ENCODE measurements at regions of chr7 and their contacts with region 1.

Region 1: DNA sequence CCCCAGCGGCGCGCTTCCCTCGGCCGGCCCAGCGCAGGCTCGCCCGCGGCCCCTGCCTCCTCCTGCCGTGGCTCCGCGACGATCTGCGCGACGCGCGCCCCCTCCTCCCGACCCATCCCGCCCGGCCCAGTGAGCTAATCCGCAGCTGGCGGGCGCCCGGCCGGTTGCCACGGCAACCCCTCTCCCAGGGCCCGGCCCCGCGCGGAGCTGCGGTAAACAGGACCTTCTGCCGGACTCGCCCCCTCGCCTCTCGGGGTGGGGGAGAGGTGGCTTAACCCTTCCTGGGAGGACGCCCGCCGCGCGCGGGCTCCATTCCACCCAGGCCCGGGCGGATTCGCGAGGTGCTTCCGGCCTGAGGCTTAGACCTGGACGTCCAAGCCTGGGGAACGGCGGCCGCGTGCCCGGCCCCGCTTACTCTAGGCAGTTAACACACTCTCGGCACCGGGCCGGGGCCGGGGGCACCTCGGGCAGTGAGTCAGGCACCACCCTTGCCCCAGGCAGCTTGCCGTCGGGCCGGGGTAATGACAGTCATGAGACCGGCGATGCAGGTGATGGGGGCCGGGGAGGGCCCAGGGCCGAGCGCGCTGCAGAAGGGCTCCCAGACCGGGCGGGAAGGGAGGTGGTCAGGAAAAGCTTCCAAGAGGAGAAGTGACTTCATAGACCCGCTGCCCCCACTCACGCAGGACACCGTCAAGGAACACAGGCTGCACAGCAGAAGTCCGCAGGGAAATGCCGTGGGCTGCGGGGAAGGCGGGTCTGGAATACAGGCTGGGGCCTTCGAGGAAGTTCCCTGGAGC is at the start of gene DENND2A:
- DNase-seq: peak; percentile 84
- ATAC-seq: peak; percentile 69
- total RNA-seq, gene DENND2A: 37.6 TPM

Region 2: DNA sequence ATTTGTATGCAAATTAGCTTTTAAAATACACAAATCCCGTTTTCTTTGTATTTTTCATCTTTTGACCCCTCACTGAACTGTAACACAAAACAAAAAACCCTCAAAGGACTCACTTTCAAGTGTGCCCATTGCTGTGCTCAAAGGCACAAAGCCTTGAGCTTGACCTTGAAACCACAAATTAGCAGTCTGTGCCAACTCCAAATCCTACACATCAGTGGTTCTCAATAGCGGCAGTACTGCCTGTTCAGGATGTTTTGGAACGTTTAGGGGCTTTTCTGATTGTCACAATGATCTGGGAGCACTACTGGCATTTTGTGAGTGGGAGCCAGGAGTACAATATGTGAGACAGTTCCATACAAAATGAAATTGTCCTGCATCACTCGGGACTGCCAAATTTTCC is 519.6 kb before region 1 on chr7:
- intact Hi-C with region 1: loop called (anchors 5 kb)
- DNase-seq: no peak
- ATAC-seq: no peak

Region 3: GRCh38 chr7:140506788-140507464 is 134.0 kb before region 1 on chr7:
- intact Hi-C with region 1: no loop called
- DNase-seq: no peak
- ATAC-seq: peak; percentile 48

Region 4: DNA sequence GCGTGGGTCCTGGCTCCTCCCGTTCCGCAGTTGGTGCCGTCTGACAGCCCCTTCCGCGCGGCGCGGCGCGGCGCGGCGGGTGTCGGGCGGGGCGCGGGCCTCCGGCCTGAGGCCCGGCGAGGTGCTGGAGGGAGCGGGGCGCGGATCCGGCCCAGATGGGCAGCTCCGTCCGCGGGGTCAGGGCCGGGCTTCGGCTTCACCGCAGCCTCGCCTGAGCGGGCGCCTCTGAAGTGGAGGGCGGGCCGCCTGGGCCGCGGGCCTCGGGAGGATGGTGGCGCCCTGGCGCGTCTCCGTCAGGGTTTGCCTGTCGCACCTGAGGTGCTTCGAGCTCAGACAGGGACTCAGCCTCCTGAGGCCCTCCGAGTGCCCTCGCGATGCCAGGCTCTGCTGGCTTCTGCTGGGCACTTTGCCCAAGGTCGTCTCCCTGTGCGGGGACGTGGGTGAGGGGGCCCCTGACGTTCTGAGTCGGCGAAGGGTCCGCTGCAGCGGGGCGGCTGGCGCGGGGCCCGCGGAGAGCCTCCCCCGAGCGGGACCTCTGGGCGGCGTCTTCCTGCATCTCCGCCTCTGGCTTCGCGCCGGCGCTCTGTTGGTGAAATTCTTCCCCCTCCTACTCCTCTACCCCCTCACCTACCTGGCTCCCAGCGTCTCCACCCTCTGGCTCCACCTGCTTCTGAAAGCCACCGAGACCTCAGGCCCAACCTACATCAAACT is 32.3 kb after region 1 on chr7:
- intact Hi-C with region 1: no loop called
- DNase-seq: peak; percentile 71
- ATAC-seq: peak; percentile 51

Region 5: DNA sequence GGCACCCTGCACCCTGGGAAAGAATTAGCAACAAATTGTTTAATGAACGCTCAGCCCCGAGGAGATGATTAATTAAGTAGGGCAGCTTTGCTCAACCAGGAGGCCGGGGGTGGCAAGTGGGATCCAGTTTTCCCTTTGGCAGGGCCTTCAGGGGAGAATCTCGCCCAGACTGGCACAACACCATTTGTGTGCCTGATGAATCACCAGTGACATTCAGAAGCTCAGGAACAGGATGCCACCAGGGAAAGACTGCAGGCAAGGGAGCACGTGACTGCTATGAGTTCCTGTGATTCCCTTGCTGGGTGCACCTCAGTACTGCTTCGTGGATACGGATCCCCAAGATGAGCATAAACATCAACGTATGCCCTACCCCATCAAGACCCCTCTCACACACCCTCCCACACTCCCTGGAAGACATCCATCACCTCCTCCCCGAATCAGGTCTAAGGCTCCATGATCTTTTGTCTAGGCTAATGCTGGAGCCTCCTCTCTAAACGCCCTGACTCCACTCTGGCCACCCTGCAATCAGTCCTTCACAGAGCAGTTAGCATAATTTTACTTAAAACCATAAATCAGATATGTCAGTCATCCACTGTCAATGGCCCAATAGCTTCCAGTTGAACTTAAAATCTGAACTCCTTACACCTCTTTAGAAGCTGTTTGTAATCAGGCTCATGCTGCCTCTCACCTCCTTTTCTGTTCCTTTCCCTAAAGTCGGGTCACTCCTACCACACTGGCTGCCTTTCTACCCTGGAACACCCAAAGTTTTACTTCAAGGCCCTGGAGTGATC is 801.1 kb after region 1 on chr7:
- intact Hi-C with region 1: no loop called
- DNase-seq: no peak
- ATAC-seq: peak; percentile 13

Measured in sciatic nerve (tissue), 2 donors.